ENCODE measurements at regions of chr17 and their contacts with region 1.

Region 1: DNA sequence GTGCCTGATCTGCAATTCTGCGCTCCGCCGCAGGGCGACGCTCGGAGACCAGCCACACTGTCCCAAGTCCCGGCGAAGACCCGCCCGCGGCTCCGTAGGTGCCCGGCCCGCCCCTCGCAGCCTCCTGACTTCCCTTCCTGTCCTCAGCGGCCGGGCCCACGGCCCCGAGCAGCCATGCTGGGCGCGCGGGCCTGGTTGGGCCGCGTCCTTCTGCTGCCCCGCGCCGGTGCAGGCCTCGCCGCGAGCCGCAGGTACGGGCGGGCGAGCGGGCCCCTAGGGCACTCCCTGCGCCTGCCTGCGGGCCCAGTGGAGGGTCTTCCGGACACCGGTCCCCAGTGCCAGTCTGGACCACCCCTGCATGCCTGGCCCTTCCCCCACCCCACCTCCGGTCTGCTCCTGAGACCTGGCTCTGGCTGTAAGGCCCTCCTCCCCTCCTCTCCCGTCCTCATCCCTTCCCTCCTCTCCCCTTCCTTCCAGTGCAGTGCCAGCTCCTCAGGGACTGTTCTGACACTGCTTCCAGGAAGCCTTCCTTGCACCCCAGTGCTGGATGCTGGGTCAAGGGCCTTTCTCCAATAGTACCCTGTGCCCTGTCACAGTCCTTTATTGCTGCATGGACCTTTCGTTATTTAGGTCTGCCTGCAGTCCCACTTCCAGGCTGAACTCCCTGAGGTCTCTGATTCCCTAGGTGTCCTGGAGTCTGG is at the start of gene SPATA20:
- DNase-seq: peak; percentile 96
- ATAC-seq: peak; percentile 88
- total RNA-seq, gene SPATA20: 58.2 TPM

Region 2: GRCh38 chr17:50482516-50482915 is 64.7 kb before region 1 on chr17:
- intact Hi-C with region 1: loop called (anchors 5 kb)
- DNase-seq: peak; percentile 96
- ATAC-seq: peak; percentile 71

Region 3: GRCh38 chr17:50613007-50613992 is 66.1 kb after region 1 on chr17:
- intact Hi-C with region 1: loop called (anchors 5 kb)
- DNase-seq: no peak
- ATAC-seq: peak; percentile 52

Region 4: GRCh38 chr17:50626037-50626574 is 78.9 kb after region 1 on chr17:
- intact Hi-C with region 1: loop called (anchors 2 kb)
- DNase-seq: peak; percentile 85
- ATAC-seq: peak; percentile 88

Region 5: GRCh38 chr17:50681263-50682210 is 134.4 kb after region 1 on chr17:
- intact Hi-C with region 1: loop called (anchors 5 kb)
- DNase-seq: no peak
- ATAC-seq: peak; percentile 80

Region 6: GRCh38 chr17:50699410-50700074 is 152.4 kb after region 1 on chr17:
- intact Hi-C with region 1: loop called (anchors 5 kb)
- DNase-seq: no peak
- ATAC-seq: no peak

Region 7: DNA sequence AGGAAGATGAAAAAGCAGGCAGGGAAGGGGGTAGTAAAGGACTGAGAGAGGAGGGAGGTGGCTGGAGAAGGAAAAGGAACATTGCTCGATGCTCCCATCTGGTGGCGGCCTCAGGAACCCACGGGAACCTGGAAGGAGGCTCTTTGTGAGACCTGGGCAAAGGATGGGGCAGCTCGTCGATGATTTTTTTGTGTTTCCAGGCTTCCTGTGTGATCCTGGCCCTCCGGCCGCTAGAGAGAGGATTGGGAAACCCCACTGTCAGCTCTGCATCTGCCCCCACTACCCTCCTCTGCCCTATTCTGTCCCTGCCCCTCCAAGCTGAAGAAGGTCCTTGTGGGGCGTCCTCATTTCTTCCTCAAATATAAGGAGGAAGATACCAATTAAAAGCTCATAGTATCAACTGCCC is 294.8 kb after region 1 on chr17:
- intact Hi-C with region 1: loop called (anchors 10 kb)
- DNase-seq: peak; percentile 81
- ATAC-seq: peak; percentile 78